Aorta (tissue), 5 donors: ENCODE measurements at regions of chr9 and their contacts with region 1.

Region 1: DNA sequence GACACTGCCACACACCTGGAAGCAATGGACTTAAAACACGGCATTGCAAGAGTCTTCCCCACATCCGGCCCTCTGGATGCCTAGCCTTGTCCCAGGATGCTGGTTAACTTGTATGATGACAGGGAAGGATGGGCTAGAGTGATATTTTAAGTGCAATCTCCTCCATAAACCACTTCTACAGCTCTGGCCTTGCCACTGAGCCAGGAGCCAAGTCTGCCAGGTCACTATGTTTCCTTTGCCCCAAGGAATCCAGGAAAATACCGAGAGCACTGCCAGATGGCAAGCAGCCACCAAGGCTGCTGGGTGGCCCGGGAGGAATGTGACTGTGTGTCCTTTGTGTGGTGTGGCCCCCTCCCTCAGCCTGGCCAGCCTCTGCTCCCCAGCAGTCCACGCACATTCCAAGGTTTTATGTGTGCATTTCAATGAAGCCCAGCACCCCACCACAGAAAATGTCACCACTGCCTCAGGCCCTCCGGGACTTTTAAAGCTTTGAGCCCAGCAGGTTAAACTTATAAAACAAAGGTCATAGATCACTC is 106.0 kb downstream of the FRMD3 start:
- DNase-seq: peak; percentile 88 to 92
- ATAC-seq: peak; percentile 79
- H3K4me3 ChIP-seq: no peak overlapping the region
- H3K27ac ChIP-seq: peak overlapping the region in 1 of 2 donors; percentile 88
- H3K4me1 ChIP-seq: peaks cover 0 to 6% of the 10 kb centered on the region in 2 donors
- H3K27me3 ChIP-seq: no peaks in the 10 kb centered on the region

Region 2: DNA sequence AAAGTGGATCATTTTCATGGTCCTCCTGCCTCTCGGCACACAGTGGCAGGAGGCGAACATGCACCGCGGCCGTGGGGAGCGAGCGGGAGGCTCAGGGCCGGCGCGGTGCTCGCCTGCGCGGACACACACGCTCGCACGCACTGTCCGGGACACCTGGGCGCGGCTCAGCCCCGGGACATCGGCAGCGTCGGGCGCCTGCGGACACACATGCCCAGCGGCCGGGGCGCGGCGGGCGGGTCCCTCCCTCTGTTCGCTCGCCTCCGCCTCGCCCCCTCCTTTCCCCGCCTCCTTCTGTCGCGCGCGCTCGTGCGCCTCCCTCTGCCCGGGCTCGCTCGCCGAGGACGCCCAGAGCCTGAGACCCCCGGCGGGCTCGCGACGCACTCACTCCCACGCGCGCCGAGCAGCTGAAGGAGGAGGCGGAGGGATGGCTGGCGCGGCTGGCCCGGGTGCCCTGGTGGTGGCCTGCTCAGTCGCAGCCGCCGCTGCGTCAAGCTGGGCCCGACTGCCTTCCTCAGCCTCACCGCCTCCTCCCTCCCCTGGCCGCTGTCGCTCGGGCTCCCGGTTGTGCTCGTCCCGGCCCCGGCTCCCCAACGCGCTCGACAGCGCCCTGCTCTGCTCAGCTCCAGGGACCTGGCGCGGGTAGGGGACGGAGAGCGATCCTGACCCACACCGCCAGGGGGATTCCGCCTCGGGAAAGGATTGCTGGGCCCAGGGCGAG is 106.2 kb after region 1 on chr9 and contains the start of gene FRMD3:
- intact Hi-C with region 1: loop called in 1 of 2 experiments (anchors 5 kb)
- DNase-seq: peak; percentile 88 to 92
- ATAC-seq: peak; percentile 89
- H3K4me3 ChIP-seq: peak within 1 kb of the TSS; percentile 2 to 48
- H3K27ac ChIP-seq: peak within 1 kb of the TSS in 1 of 2 donors; percentile 4
- H3K4me1 ChIP-seq: no peaks in the 10 kb centered on the region
- H3K27me3 ChIP-seq: no peaks in the 10 kb centered on the region
- total RNA-seq, gene FRMD3: 7.2 to 7.4 TPM